B cell (primary cell): ENCODE measurements at regions of chr1 and their contacts with region 1.

Region 1: DNA sequence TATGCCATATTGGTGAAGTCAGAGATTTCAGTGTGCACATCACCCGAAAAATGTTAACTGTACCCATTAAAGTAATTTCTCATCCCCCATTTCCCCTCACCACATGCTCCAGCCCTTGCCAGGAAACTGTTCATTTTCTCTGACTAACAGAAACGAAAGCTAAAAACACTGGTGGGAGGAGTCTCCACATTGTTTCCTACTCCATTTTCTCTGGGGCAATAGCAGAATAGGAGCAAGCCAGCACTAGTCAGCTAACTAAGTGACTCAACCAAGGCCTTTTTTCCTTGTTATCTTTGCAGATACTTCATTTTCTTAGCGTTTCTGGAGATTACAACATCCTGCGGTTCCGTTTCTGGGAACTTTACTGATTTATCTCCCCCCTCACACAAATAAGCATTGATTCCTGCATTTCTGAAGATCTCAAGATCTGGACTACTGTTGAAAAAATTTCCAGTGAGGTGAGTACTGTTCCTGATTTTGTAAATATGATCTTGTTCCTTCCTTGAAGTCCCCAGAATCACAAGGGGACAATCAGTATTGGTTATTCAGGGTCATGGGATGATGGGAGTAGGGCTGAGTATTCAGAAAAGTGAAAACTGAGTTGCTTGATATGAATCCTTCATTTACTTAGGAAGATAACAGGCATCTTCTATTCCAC is at the start of gene IFI16:
- DNase-seq: peak; percentile 71
- ATAC-seq: peak; percentile 70
- H3K4me3 ChIP-seq: peak within 1 kb of the TSS; percentile 71 to 100 (median 91)
- H3K4me3 Mint-ChIP-seq: peak within 1 kb of the TSS; percentile 98
- H3K27ac ChIP-seq: peak within 1 kb of the TSS; percentile 66 to 88
- H3K27ac Mint-ChIP-seq: peak within 1 kb of the TSS; percentile 94
- H3K4me1 ChIP-seq: peaks cover 56 to 59% of the 10 kb centered on the region in 2 donors
- H3K4me1 Mint-ChIP-seq: peaks cover 67% of the 10 kb centered on the region
- H3K27me3 ChIP-seq: no peaks in the 10 kb centered on the region
- H3K27me3 Mint-ChIP-seq: no peaks in the 10 kb centered on the region
- CTCF ChIP-seq: no peak
- total RNA-seq, gene IFI16: 150 and 176 TPM in 2 replicates

Region 2: GRCh38 chr1:158285756-158286241 is 724.0 kb before region 1 on chr1:
- CTCF ChIA-PET with region 1: no interaction called
- POLR2A ChIA-PET with region 1: no interaction called
- intact Hi-C with region 1: loop called (anchors 10 kb)
- DNase-seq: peak; percentile 91
- ATAC-seq: peak; percentile 77
- H3K4me3 ChIP-seq: peak overlapping the region; percentile 3 to 59 (median 30)
- H3K4me3 Mint-ChIP-seq: peak overlapping the region; percentile 86
- H3K27ac ChIP-seq: peak overlapping the region; percentile 75 to 79
- H3K27ac Mint-ChIP-seq: peak overlapping the region; percentile 94
- H3K4me1 ChIP-seq: peaks cover 80 to 93% of the 10 kb centered on the region in 2 donors
- H3K4me1 Mint-ChIP-seq: peaks cover 72% of the 10 kb centered on the region
- H3K27me3 ChIP-seq: no peaks in the 10 kb centered on the region
- H3K27me3 Mint-ChIP-seq: no peaks in the 10 kb centered on the region
- CTCF ChIP-seq: no peak

Region 3: DNA sequence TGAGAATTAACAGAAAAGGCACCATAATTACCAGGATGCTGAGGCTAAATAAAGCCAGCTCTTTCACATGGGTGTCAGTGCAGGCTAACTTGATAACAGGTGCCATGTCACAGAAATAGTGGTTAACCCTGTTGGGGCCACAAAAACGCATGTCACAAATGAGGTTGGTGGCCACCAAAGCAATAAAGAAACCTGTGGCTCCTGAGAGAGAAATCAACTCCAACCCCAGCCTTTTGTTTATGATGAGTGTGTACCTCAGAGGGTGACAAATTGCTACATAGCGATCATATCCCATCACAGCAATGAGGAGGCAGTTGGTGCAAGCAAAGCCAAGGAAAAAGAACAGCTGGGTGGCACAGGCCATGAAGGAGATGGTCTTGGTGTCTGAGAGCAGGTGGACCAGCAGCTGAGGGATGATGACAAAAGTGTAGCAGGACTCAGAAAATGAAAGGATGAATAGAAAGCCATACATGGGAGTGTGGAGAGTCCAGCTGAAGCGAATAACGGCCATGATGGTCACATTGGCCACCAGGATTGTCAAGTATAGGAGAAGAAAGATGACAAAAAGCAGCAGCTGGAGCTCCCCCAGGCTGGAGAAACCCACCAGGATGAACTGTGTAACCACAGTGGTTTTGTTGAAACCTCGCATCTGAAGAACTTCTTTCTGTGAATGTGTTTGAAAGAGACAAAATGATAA is 610.9 kb before region 1 on chr1 and contains the start of gene OR10T2:
- CTCF ChIA-PET with region 1: no interaction called
- POLR2A ChIA-PET with region 1: no interaction called
- intact Hi-C with region 1: loop called (anchors 10 kb)
- DNase-seq: no peak
- ATAC-seq: no peak
- H3K4me3 ChIP-seq: no peak within 1 kb of the TSS
- H3K4me3 Mint-ChIP-seq: no peak within 1 kb of the TSS
- H3K27ac ChIP-seq: no peak within 1 kb of the TSS
- H3K27ac Mint-ChIP-seq: no peak within 1 kb of the TSS
- H3K4me1 ChIP-seq: peaks cover 2 to 12% of the 10 kb centered on the region in 2 donors
- H3K4me1 Mint-ChIP-seq: peaks cover 12% of the 10 kb centered on the region
- H3K27me3 ChIP-seq: no peaks in the 10 kb centered on the region
- H3K27me3 Mint-ChIP-seq: no peaks in the 10 kb centered on the region
- CTCF ChIP-seq: no peak
- total RNA-seq, gene OR10T2: not detected in 2 replicates

Region 4: GRCh38 chr1:158864595-158864994 is 145.2 kb before region 1 on chr1:
- CTCF ChIA-PET with region 1: no interaction called
- POLR2A ChIA-PET with region 1: no interaction called
- intact Hi-C with region 1: no loop called
- DNase-seq: no peak
- ATAC-seq: no peak
- H3K4me3 ChIP-seq: no peak overlapping the region
- H3K4me3 Mint-ChIP-seq: no peak overlapping the region
- H3K27ac ChIP-seq: no peak overlapping the region
- H3K27ac Mint-ChIP-seq: no peak overlapping the region
- H3K4me1 ChIP-seq: no peaks in the 10 kb centered on the region
- H3K4me1 Mint-ChIP-seq: no peaks in the 10 kb centered on the region
- H3K27me3 ChIP-seq: peaks cover 0 to 8% (median 0%) of the 10 kb centered on the region in 4 experiments
- H3K27me3 Mint-ChIP-seq: peaks cover 35% of the 10 kb centered on the region
- CTCF ChIP-seq: no peak

Region 5: GRCh38 chr1:159077120-159077961 is 67.5 kb after region 1 on chr1:
- CTCF ChIA-PET with region 1: interaction called, 23 read pairs
- POLR2A ChIA-PET with region 1: interaction called, 4 read pairs
- intact Hi-C with region 1: loop called (anchors 2 kb)
- DNase-seq: peak; percentile 83
- ATAC-seq: peak; percentile 61
- H3K4me3 ChIP-seq: peak overlapping the region in 4 of 5 experiments; percentile 54 to 80 (median 60)
- H3K4me3 Mint-ChIP-seq: peak overlapping the region; percentile 89
- H3K27ac ChIP-seq: peak overlapping the region; percentile 76 to 80
- H3K27ac Mint-ChIP-seq: peak overlapping the region; percentile 96
- H3K4me1 ChIP-seq: peaks cover 13 to 24% of the 10 kb centered on the region in 2 donors
- H3K4me1 Mint-ChIP-seq: peaks cover 28% of the 10 kb centered on the region
- H3K27me3 ChIP-seq: no peaks in the 10 kb centered on the region
- H3K27me3 Mint-ChIP-seq: no peaks in the 10 kb centered on the region
- CTCF ChIP-seq: no peak

Region 6: GRCh38 chr1:159152031-159152430 is 142.2 kb after region 1 on chr1:
- CTCF ChIA-PET with region 1: no interaction called
- POLR2A ChIA-PET with region 1: no interaction called
- intact Hi-C with region 1: no loop called
- DNase-seq: no peak
- ATAC-seq: no peak
- H3K4me3 ChIP-seq: no peak overlapping the region
- H3K4me3 Mint-ChIP-seq: no peak overlapping the region
- H3K27ac ChIP-seq: no peak overlapping the region
- H3K27ac Mint-ChIP-seq: no peak overlapping the region
- H3K4me1 ChIP-seq: no peaks in the 10 kb centered on the region
- H3K4me1 Mint-ChIP-seq: peaks cover 3% of the 10 kb centered on the region
- H3K27me3 ChIP-seq: no peaks in the 10 kb centered on the region
- H3K27me3 Mint-ChIP-seq: no peaks in the 10 kb centered on the region
- CTCF ChIP-seq: no peak